ENCODE measurements at regions of chr2 and their contacts with region 1.

Region 1: DNA sequence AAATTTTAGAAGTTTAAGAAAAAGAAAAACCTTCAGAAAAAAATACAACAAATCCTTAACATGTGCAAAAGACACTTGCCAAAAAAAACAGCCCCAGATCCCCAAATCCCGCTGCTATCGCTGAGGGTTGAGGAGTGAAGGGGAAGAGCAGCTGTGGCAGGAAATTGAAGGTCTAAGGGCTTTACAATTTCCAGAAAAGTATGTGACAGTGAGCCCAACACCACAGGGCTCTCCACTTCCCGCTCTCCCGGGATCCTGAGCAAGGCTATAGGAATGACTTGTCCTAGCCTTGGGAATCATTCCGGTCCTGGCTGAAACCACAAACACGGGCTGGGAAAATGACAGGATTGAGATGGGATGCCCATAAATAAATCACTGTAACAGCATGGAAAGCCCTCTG is 191.4 kb downstream of the TMEM163 start:
- DNase-seq: no peak
- CTCF ChIP-seq: no peak

Region 2: DNA sequence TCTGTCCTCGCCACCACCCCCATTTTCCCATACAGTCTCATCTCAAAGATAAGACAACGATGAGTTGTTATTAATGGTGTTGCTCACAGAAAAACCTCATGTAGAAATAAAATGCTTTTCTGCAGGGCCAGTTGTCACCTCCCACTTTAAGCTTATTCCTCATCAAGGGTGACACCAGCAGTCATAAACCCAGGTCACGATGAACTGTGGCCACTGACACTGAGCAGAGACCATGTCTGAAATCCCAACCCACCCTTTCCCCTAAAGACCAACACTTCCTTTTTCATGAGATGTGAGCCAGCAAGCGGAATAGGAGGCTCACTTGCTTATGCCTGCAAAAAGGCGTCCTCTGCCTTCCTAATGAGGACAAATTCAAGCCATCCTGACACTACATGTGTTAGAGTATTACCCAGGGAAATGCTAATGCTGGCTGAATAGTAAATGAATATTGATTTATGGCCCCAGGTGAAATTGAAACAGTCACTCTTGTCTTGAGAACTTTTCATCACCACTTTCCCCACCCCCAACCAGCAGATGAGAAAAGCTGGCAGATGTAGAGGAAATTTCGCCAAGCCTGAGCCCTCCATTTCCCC is 45.2 kb before region 1 on chr2:
- CTCF ChIA-PET with region 1: no interaction called
- POLR2A ChIA-PET with region 1: interaction called, 10 read pairs
- DNase-seq: no peak
- CTCF ChIP-seq: no peak

Region 3: GRCh38 chr2:135299656-135300244 is 772.4 kb after region 1 on chr2:
- CTCF ChIA-PET with region 1: no interaction called
- POLR2A ChIA-PET with region 1: no interaction called
- DNase-seq: peak; percentile 30
- CTCF ChIP-seq: no peak